PC-9 (cell line): ENCODE measurements at regions of chr13 and their contacts with region 1.

Region 1: DNA sequence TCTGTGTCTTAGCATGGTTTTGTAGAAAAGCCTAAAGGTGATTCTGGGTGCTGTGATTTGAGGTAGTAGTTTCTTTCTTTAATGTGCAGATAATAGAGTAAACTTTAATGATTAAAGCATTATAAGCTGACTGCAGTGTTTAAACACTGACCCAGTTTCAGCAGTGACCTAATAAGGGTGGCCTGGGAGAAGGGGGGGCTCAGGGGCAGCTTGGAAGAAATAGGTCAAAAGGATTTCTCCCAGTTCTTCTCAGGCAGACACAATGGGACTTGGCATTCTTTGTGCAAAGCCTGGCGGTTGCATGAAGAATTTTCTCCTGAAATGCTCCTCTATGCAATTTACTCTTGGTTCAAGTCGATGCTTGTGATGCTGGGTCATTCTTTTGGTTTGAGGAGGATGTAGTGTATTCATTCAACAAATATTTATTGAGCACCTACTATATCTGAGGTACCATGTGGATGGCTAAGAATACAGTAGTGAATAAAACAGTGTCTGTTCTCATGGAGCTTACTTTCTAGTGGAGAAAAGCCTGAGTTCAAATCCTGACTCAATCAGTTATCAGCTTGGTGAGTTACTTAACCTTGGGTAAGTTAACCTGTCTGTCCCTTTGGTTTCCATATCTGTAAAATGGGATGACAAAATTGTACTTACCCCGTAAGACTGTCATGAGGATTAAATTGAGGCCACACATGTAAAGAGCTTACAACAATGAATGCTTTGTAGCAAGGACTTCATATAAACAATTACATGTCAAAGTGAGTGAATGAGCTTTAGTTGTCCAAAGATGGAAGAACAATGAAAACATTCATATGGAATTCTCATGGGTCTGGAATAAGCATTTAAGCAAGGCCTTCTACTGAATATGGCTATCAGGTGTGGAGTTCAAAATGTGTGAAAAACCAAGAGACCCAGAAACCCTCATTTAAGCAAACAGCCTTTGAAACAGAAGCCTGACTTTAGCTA is 210.2 kb downstream of the KCNRG start:
- DNase-seq: no peak
- H3K4me3 ChIP-seq: no peak overlapping the region
- H3K27ac ChIP-seq: no peak overlapping the region
- H3K4me1 ChIP-seq: 0 out of 2 replicates have a peak, but pooled peaks cover 5% of the 10 kb centered on the region
- H3K27me3 ChIP-seq: no peaks in the 10 kb centered on the region
- CTCF ChIP-seq: no peak

Region 2: GRCh38 chr13:50116430-50116973 is 109.0 kb before region 1 on chr13:
- CTCF ChIA-PET with region 1: no interaction called
- POLR2A ChIA-PET with region 1: no interaction called
- intact Hi-C with region 1: no loop called
- DNase-seq: peak in 1 of 2 experiments; percentile 39
- H3K4me3 ChIP-seq: no peak overlapping the region
- H3K27ac ChIP-seq: no peak overlapping the region
- H3K4me1 ChIP-seq: 0 out of 2 replicates have a peak, but pooled peaks cover 3% of the 10 kb centered on the region
- H3K27me3 ChIP-seq: no peaks in the 10 kb centered on the region
- CTCF ChIP-seq: no peak

Region 3: GRCh38 chr13:50758796-50759195 is 533.3 kb after region 1 on chr13:
- CTCF ChIA-PET with region 1: no interaction called
- POLR2A ChIA-PET with region 1: interaction called, 10 read pairs
- intact Hi-C with region 1: no loop called
- DNase-seq: no peak
- H3K4me3 ChIP-seq: no peak overlapping the region
- H3K27ac ChIP-seq: no peak overlapping the region
- H3K4me1 ChIP-seq: no peaks in the 10 kb centered on the region
- H3K27me3 ChIP-seq: no peaks in the 10 kb centered on the region
- CTCF ChIP-seq: no peak